Activated CD4-positive, alpha-beta memory T cell treated with anti-CD3 and anti-CD28 coated beads, Interleukin-2, amount 10 ng/mL, durations not matched to agents 7 days and 5 days (primary cell): ENCODE measurements at regions of chr20 and their contacts with region 1.

Region 1: DNA sequence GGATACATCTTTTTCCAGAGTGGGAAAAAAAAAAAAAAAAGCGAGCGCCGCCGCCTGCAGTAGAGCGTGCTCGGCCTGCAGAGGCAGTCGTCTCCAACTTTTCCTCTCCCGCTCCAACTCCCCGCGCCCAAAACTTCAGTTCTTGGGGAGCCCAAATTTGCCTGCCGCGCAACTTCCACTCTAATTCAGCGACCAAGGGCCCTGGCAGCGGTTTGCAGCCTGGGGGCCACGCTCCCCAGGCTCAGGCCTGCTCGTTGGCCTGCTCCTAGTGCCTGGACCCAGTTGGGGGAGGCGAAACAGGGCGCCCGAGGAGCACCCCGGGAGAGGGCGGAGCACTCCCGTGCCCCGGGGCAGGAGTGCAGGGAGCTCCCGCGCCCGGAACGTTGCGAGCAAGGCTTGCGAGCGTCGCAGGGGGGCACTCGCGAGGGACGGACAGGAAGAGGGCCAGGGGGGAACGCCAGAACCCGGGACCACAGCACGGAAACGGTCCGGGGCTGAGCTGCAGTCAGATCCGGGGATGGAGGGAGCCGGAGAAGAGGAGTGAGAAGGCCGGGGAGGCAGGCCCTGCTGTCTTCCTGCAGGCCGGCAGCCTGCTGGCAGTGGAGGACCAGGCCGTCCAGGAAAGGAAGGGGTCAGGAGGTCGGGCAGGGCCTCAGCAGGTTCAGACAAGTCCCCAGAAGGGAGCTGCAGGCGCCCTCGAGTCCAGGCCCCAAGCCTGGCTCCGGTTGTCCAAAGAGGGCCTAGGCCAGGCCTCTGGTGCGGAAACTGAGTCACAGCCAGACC is at the start of gene STX16:
- DNase-seq: peak; percentile 91
- H3K4me3 Mint-ChIP-seq: peak within 1 kb of the TSS; percentile 98
- H3K27ac Mint-ChIP-seq: peak within 1 kb of the TSS; percentile 99
- H3K4me1 Mint-ChIP-seq: peaks cover 20% of the 10 kb centered on the region
- H3K27me3 Mint-ChIP-seq: no peaks in the 10 kb centered on the region
- total RNA-seq, gene STX16: 152 to 153 TPM

Region 2: GRCh38 chr20:58388882-58389323 is 262.1 kb before region 1 on chr20 and contains the start of gene VAPB:
- CTCF ChIA-PET with region 1: interaction called, 4 read pairs
- POLR2A ChIA-PET with region 1: interaction called, 22 read pairs
- DNase-seq: peak; percentile 97
- H3K4me3 Mint-ChIP-seq: peak within 1 kb of the TSS; percentile 92
- H3K27ac Mint-ChIP-seq: peak within 1 kb of the TSS; percentile 92
- H3K4me1 Mint-ChIP-seq: peaks cover 38% of the 10 kb centered on the region
- H3K27me3 Mint-ChIP-seq: peaks cover 8% of the 10 kb centered on the region
- total RNA-seq, gene VAPB: 31.3 to 31.5 TPM

Region 3: GRCh38 chr20:58692594-58693226 is 41.7 kb after region 1 on chr20 and contains the start of gene NPEPL1:
- CTCF ChIA-PET with region 1: interaction called, 14 read pairs
- POLR2A ChIA-PET with region 1: interaction called, 62 read pairs
- DNase-seq: peak; percentile 69
- H3K4me3 Mint-ChIP-seq: peak within 1 kb of the TSS; percentile 76
- H3K27ac Mint-ChIP-seq: peak within 1 kb of the TSS; percentile 56
- H3K4me1 Mint-ChIP-seq: peaks cover 23% of the 10 kb centered on the region
- H3K27me3 Mint-ChIP-seq: no peaks in the 10 kb centered on the region
- total RNA-seq, gene NPEPL1: 29.1 to 30.7 TPM

Region 4: DNA sequence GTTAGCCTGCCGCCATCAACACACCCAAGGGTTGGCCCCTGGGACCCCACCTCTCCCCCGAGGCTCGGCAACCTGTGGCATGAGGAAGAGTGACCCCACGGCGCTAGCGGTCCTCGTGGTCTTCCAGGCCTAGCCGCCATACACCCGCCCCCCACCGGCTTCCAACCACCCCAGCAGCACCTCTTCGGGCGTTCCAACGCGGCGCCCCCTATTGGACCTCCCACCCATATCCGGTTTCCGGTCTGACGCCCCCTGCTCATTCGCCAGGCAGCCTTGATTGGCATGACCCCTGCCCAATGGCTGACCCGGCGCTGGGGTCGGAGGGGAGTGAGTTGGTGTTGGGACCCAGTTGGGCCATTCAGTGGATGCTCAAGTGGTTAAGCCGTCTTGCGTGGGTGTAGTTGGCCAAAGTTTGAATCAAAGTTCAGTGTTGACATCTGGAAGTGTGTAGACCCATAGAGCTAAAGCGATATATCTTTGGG is 199.8 kb after region 1 on chr20 and contains the start of gene GNAS-AS1:
- CTCF ChIA-PET with region 1: interaction called, 7 read pairs
- POLR2A ChIA-PET with region 1: interaction called, 16 read pairs
- DNase-seq: peak; percentile 80
- H3K4me3 Mint-ChIP-seq: peak within 1 kb of the TSS; percentile 80
- H3K27ac Mint-ChIP-seq: no peak within 1 kb of the TSS
- H3K4me1 Mint-ChIP-seq: peaks cover 42% of the 10 kb centered on the region
- H3K27me3 Mint-ChIP-seq: peaks cover 71% of the 10 kb centered on the region
- total RNA-seq, gene GNAS-AS1: 0.65 to 1.0 TPM

Region 5: GRCh38 chr20:58980700-58981627 is 330.0 kb after region 1 on chr20 and contains the start of gene NELFCD:
- CTCF ChIA-PET with region 1: interaction called, 4 read pairs
- POLR2A ChIA-PET with region 1: interaction called, 16 read pairs
- DNase-seq: peak; percentile 90
- H3K4me3 Mint-ChIP-seq: peak within 1 kb of the TSS; percentile 90
- H3K27ac Mint-ChIP-seq: peak within 1 kb of the TSS; percentile 79
- H3K4me1 Mint-ChIP-seq: peaks cover 37% of the 10 kb centered on the region
- H3K27me3 Mint-ChIP-seq: peaks cover 6% of the 10 kb centered on the region
- total RNA-seq, gene NELFCD: 63.3 to 69.0 TPM

Region 6: DNA sequence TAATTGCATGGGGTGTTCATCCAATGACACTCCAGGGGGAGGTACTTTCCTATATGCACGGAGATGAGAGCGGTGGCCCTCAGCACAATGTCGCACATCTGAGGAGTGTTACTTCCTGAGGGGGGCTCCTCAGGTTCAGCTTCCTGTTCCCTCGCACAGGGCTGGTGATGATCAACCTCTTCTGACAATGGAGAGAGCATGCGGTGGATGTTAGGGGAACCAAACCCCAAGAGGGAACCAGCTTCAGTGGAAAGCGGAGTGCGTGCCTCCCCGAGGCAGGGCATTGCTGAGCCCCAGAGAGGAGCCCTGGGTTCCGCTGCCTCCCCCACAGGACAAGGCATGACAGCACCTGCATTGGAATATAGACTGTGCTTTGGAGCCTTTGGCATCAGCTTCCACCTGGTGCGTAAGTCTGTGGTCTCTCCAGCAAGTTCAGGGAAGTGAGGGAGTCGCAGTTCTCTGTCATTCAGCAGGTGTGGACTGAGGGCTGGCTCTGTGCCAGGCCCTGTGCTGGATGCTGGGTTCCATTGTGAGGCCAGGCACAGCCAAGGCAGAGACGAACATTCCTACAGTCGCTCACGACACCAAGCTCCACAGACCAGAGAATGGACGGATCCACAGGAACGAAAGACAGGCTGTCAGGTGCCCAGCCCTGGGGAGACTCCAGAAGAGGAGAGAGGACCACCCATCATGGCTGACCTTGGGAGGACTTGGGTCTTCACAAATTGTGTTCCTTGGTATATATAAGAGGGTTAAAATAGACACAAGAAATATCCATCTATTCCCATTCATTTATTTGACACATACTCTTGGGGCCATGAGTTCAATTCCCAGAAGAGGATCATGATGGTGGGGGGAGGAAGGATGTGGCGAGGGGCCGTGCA is 508.8 kb after region 1 on chr20:
- CTCF ChIA-PET with region 1: no interaction called
- POLR2A ChIA-PET with region 1: interaction called, 16 read pairs
- DNase-seq: peak; percentile 70
- H3K4me3 Mint-ChIP-seq: peak overlapping the region; percentile 76
- H3K27ac Mint-ChIP-seq: peak overlapping the region; percentile 99
- H3K4me1 Mint-ChIP-seq: peaks cover 68% of the 10 kb centered on the region
- H3K27me3 Mint-ChIP-seq: peaks cover 1% of the 10 kb centered on the region